Posterior cingulate gyrus (tissue), 11 donors: ENCODE measurements at regions of chr2 and their contacts with region 1.

Region 1: DNA sequence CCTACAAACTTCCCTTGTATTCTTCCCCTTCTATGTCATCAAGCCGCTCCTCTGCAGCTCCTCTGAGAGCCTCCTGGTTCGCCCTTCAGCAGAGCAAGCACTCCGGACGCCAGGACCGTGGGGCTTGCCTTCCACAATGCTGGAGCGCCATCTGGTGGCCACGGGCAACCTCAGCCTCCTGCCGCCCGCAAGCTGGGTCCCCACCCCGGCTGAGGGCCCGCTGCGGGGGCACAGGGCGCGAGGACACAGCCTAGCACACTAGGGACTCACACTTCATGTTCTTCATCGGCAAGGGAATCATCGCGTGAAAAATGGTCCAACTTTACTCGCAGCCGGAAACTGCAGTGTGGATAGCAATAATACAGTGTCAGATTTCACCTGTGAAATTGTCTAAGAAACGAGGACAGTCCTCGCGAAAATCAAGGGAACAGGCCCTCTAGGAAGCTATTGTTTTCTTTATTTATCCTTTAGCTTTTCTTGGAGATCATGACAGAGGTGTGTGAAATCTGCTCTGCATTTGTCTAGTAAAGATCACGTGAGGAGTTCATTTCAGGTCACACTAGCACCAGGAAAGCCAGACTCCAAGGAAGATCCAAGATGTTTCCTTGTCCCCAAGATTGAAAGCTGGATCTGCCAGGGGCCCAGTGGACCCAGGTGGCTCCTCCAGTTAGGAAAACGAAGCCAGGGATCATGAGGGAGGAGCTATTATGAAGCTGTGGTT is 5.8 kb downstream of the PRLH start:
- DNase-seq: peak; percentile 75 to 98 (median 92)

Region 2: DNA sequence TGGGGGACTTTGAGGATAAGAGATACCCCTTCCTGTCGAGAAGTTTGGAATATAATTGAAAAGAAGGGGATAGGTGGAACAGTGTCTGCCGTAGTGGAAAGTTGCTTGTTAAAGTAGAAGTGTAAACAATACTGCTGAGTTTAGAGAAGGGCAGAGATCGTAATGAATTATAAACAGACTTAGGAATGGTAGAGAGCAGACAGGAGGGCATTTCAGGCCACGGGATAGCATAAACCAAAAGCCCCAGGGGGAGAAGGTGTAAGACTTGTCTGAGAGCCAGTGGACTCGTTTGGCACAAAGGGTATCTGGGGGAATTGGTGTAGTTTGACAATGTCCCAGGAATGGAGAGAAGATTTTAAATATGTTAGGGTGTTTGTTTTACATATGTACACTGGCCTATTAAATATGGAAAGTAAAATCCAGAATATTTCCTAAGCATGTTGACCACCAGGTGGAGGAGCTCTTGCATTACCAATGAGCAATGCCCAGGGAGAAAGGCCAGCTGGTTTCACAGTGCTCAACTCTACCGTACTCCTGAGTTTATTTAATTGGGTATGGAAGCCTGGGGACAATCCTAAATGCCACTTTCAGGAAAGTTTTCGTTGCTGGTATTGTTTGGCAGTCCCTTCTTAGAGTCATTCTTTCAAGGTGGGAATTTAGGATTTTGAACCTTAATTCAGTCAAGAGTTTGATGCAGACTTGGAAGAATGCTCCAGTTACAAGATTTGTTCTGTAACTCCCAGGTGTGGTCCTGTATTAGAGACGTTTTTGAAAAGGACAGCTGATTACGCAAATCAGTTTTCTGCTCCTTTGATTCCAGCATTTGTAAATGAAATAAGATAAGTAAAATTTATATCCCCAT is 479.0 kb before region 1 on chr2:
- intact Hi-C with region 1: loop called (anchors 5 kb)
- DNase-seq: no peak

Region 3: GRCh38 chr2:237421542-237422116 is 150.6 kb before region 1 on chr2:
- intact Hi-C with region 1: loop called (anchors 1 kb)
- DNase-seq: peak in 9 of 10 donors; percentile 45 to 95 (median 65)

Region 4: DNA sequence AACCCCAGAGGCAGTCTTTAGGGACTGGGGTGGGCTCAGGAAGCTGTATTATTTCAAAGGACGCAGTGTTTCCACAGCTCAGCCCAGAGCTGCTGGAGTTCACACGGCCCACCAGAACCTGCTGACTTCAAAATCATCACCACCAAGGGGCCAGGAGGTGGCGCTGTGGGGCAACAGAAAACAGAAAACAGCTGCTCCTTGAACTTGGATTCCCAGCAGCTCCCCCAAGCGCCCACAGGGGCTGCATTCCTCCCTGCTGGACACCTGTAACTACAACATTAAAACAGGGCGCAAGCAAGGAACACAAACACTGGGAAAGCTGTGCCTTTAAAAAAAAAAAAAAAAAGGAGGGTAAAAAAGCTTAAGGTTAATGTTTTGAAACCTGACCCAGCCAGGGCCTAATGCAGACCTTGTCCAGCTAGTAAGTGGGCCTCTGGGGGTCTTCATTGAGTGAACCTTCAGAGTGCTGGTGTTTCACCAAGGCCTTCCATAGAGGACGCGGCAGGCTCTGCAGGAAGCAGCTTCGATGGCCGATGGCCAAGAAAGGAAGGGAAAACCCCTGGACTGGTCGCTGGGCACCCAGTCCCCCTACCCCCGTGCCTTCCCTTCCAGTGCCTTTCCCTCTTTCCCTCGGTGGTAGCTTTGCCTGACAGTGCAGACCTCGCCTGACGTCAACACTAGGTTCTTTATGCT is 59.3 kb before region 1 on chr2:
- intact Hi-C with region 1: loop called (anchors 1 kb)
- DNase-seq: peak; percentile 73 to 98 (median 83)